Caco-2 (cell line): ENCODE measurements at regions of chr11 and their contacts with region 1.

Region 1: GRCh38 chr11:66818231-66818955 is 24.8 kb upstream of the RCE1 start:
- DNase-seq: peak in 1 of 2 experiments; percentile 51
- H3K4me3 ChIP-seq: no peak overlapping the region
- H3K4me3 Mint-ChIP-seq: no peak overlapping the region
- H3K27ac Mint-ChIP-seq: peak overlapping the region; percentile 48
- H3K4me1 ChIP-seq: peaks cover 41% of the 10 kb centered on the region
- H3K4me1 Mint-ChIP-seq: peaks cover 13% of the 10 kb centered on the region
- H3K27me3 ChIP-seq: no peaks in the 10 kb centered on the region
- H3K27me3 Mint-ChIP-seq: no peaks in the 10 kb centered on the region
- CTCF ChIP-seq: no peak

Region 2: GRCh38 chr11:66744485-66745340 is 73.7 kb before region 1 on chr11:
- CTCF ChIA-PET with region 1: no interaction called
- POLR2A ChIA-PET with region 1: no interaction called
- intact Hi-C with region 1: loop called (anchors 2 kb)
- DNase-seq: peak; percentile 94 to 98
- H3K4me3 ChIP-seq: peak overlapping the region; percentile 84
- H3K4me3 Mint-ChIP-seq: peak overlapping the region; percentile 83
- H3K27ac Mint-ChIP-seq: peak overlapping the region; percentile 69
- H3K4me1 ChIP-seq: peaks cover 14% of the 10 kb centered on the region; the same call in 1 of the 2 replicates
- H3K4me1 Mint-ChIP-seq: peaks cover 7% of the 10 kb centered on the region
- H3K27me3 ChIP-seq: no peaks in the 10 kb centered on the region
- H3K27me3 Mint-ChIP-seq: no peaks in the 10 kb centered on the region
- CTCF ChIP-seq: no peak